ENCODE measurements at regions of chr6 and their contacts with region 1.

Region 1: GRCh38 chr6:136582711-136583471 is 32.7 kb upstream of the MAP7 start:
- DNase-seq: peak; percentile 68
- H3K4me3 ChIP-seq: no peak overlapping the region
- CTCF ChIP-seq: peak; percentile 3

Region 2: DNA sequence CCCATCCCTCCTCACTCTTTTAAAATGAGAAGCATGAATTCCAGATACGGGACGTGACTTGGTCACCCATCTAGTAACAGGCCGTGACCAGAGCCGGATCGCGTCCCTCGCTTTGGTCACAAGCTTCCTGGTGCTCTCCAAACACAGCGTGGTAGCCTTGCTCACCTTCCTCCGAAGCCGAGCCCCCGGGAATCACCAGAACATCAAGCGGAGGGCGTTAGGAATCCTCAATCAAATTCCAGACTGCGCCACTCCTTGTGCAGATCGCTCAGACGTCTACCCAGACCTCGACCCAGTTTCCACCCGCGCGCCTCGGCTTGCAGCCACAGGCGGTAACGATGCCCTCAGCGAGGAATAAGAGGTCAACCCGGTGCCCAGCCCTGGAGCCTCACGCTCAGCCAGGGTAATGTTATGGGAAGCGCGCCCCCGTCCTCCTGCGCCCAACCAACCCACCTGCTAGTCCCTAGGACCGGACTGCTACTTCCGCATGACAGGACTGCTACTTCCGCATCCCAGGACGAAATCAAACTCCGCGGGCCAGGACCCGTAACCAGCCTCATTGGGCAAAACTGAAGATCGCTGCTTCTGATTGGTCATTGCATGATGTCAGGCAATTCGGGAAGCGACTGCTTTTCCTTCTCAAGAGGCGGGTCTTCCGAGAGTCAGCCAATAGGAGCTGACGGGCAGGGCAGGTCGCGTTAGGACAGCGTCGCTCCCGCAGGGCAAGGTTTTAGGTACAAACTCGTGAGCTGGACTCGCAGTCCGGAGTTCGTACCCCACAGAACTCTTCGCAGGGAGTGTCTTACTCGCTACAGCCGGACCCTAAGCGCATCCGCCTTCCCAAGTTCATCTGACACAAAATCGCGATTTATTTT is 332.8 kb before region 1 on chr6 and contains the start of gene MTFR2:
- in situ Hi-C with region 1: no loop called
- DNase-seq: peak; percentile 99
- H3K4me3 ChIP-seq: peak within 1 kb of the TSS; percentile 66
- CTCF ChIP-seq: no peak

Region 3: GRCh38 chr6:136510782-136511181 is 72.1 kb before region 1 on chr6:
- in situ Hi-C with region 1: no loop called
- DNase-seq: no peak
- H3K4me3 ChIP-seq: no peak overlapping the region
- CTCF ChIP-seq: no peak

Region 4: GRCh38 chr6:136639702-136640101 is 56.8 kb after region 1 on chr6:
- in situ Hi-C with region 1: loop called (anchors 5 kb)
- DNase-seq: no peak
- H3K4me3 ChIP-seq: no peak overlapping the region
- CTCF ChIP-seq: no peak